ENCODE measurements at regions of chr12 and their contacts with region 1.

Region 1: DNA sequence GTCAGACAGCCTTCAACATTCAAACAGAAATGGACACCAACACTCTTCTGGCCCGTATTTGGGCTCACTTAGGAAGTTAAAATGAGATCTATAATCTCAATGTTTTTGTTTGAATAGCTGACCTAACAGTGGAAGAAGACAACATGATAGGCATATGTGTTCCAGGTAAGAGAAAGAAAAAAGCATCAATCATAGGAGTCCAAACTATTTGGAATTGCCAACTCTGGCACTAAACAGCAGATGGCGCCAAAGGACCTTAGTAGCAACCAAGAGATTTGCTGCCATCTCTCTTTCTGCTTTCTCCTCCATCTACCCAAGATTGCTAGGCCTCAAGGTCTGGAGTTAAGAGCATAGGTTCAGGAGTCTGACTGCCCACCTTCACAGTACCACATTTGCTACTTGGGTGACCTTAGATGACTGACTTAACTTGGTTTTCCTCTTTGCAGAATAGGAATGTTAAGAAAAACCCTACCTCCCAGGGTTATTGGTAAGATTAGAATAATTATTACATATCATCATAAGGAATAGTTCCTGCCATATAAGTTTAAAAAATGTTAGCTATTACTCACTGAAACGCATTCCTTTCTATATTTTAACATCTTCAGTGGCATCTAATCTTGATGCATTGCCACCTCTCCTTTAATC is 30.2 kb downstream of the PEX5 start:
- DNase-seq: peak; percentile 80
- H3K4me3 Mint-ChIP-seq: no peak overlapping the region
- H3K27ac Mint-ChIP-seq: no peak overlapping the region
- H3K4me1 Mint-ChIP-seq: no peaks in the 10 kb centered on the region
- H3K27me3 Mint-ChIP-seq: peaks cover 23% of the 10 kb centered on the region
- CTCF ChIP-seq: peak; percentile 84

Region 2: DNA sequence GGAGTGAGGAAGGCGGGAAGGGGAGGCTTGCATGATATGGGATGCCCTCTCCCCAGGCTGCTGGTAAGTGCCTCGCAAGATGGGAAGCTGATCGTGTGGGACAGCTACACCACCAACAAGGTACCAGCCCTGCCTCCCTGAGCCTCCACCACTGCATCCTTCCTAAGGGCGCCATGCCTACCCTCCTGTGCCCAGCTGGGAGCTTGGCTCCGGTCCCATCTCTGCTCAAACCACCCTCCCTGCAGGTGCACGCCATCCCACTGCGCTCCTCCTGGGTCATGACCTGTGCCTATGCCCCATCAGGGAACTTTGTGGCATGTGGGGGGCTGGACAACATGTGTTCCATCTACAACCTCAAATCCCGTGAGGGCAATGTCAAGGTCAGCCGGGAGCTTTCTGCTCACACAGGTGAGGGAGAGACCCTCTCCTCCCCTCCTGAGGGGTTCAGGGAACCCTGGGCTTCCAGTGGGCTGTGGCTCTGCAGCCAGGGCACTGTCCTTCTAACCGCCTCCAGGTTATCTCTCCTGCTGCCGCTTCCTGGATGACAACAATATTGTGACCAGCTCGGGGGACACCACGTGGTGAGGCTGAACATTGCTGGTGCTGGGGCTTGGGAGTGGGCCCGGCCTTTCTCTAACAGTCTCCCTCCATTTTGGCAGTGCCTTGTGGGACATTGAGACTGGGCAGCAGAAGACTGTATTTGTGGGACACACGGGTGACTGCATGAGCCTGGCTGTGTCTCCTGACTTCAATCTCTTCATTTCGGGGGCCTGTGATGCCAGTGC is 376.4 kb before region 1 on chr12:
- CTCF ChIA-PET with region 1: no interaction called
- POLR2A ChIA-PET with region 1: no interaction called
- intact Hi-C with region 1: no loop called
- DNase-seq: no peak
- H3K4me3 Mint-ChIP-seq: no peak overlapping the region
- H3K27ac Mint-ChIP-seq: no peak overlapping the region
- H3K4me1 Mint-ChIP-seq: no peaks in the 10 kb centered on the region
- H3K27me3 Mint-ChIP-seq: no peaks in the 10 kb centered on the region
- CTCF ChIP-seq: no peak

Region 3: GRCh38 chr12:7068240-7068993 is 151.3 kb before region 1 on chr12:
- CTCF ChIA-PET with region 1: no interaction called
- POLR2A ChIA-PET with region 1: no interaction called
- intact Hi-C with region 1: no loop called
- DNase-seq: no peak
- H3K4me3 Mint-ChIP-seq: no peak overlapping the region
- H3K27ac Mint-ChIP-seq: no peak overlapping the region
- H3K4me1 Mint-ChIP-seq: peaks cover 9% of the 10 kb centered on the region
- H3K27me3 Mint-ChIP-seq: no peaks in the 10 kb centered on the region
- CTCF ChIP-seq: no peak

Region 4: GRCh38 chr12:7319930-7320329 is 100.2 kb after region 1 on chr12:
- CTCF ChIA-PET with region 1: interaction called, 3 read pairs
- POLR2A ChIA-PET with region 1: no interaction called
- intact Hi-C with region 1: loop called (anchors 10 kb)
- DNase-seq: no peak
- H3K4me3 Mint-ChIP-seq: no peak overlapping the region
- H3K27ac Mint-ChIP-seq: no peak overlapping the region
- H3K4me1 Mint-ChIP-seq: no peaks in the 10 kb centered on the region
- H3K27me3 Mint-ChIP-seq: peaks cover 17% of the 10 kb centered on the region
- CTCF ChIP-seq: no peak

Region 5: GRCh38 chr12:7583571-7583970 is 363.9 kb after region 1 on chr12:
- CTCF ChIA-PET with region 1: interaction called, 7 read pairs
- POLR2A ChIA-PET with region 1: no interaction called
- intact Hi-C with region 1: loop called (anchors 2 kb)
- DNase-seq: no peak
- H3K4me3 Mint-ChIP-seq: no peak overlapping the region
- H3K27ac Mint-ChIP-seq: peak overlapping the region; percentile 57
- H3K4me1 Mint-ChIP-seq: peaks cover 11% of the 10 kb centered on the region
- H3K27me3 Mint-ChIP-seq: no peaks in the 10 kb centered on the region
- CTCF ChIP-seq: no peak

Measured in MCF 10A (cell line).